ENCODE measurements at regions of chr12 and their contacts with region 1.

Region 1: GRCh38 chr12:26629864-26630263 is 203.1 kb downstream of the ITPR2 start:
- DNase-seq: no peak
- ATAC-seq: no peak
- H3K4me3 ChIP-seq: no peak overlapping the region
- H3K27ac ChIP-seq: no peak overlapping the region
- H3K4me1 ChIP-seq: no peaks in the 10 kb centered on the region
- H3K27me3 ChIP-seq: no peaks in the 10 kb centered on the region

Region 2: DNA sequence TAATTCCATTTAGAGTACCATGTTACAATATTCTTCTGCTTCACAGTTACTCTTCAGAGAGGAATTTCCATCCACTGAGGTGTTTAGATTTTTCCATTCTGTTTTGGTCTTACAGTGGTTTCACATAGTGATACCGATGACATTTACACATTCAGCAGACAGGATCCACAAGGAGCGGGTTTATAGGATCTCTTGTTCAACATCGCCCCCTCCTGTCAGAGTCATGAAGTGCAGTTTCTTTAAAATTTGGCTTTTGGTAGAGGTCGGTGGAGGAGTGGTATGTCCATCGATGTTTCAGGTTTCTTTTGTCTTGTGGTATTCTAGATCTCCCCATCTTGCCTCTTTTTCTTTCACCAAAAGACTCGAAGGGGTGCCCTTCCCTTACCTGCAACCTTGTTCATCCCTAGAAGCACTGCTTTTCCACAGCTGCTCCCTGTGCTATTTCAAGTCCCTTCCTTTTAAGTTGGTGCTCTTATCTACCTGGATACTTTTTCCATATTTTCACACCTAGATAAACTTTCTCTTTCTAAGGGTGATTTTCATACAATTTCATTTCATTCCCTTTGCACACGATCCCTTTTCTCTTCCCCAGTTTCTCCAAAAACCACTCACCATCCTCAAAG is 21.8 kb after region 1 on chr12:
- intact Hi-C with region 1: no loop called
- DNase-seq: no peak
- ATAC-seq: no peak
- H3K4me3 ChIP-seq: no peak overlapping the region
- H3K27ac ChIP-seq: no peak overlapping the region
- H3K4me1 ChIP-seq: no peaks in the 10 kb centered on the region
- H3K27me3 ChIP-seq: no peaks in the 10 kb centered on the region

Region 3: DNA sequence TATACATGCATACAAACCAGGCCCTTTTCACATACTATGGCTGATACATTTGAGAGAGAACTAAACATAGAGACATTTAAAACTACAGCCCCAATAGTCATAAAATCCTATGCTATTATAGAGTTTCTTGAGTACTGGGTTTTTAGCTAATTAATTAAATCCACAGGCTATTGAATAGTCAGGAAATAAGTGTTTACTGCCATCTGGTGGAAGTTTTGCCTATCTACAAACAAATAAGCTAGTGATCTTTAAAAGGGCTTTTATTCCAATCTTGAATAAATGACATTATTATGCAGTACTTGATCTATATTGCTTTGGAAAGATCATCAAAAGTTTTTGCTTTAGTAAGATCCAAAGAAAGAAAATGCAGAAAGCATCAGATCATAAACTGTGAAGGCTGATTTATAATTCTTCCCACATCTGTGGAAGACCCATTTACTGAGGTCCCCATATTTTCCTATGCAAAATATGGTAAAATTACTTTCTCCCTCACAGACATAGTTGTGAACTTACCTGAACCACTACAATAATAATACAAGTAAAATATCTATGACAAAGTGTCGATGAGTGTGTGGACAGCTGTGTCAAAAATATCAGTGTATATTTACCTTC is 71.8 kb after region 1 on chr12:
- intact Hi-C with region 1: loop called in 1 of 2 experiments (anchors 5 kb)
- DNase-seq: no peak
- ATAC-seq: no peak
- H3K4me3 ChIP-seq: no peak overlapping the region
- H3K27ac ChIP-seq: no peak overlapping the region
- H3K4me1 ChIP-seq: peaks cover 0 to 4% of the 10 kb centered on the region in 2 donors
- H3K27me3 ChIP-seq: no peaks in the 10 kb centered on the region

Region 4: GRCh38 chr12:26878661-26879119 is 248.8 kb after region 1 on chr12:
- intact Hi-C with region 1: loop called in 1 of 2 experiments (anchors 10 kb)
- DNase-seq: peak; percentile 49 to 77
- ATAC-seq: peak; percentile 44
- H3K4me3 ChIP-seq: no peak overlapping the region
- H3K27ac ChIP-seq: no peak overlapping the region
- H3K4me1 ChIP-seq: no peaks in the 10 kb centered on the region
- H3K27me3 ChIP-seq: no peaks in the 10 kb centered on the region

Measured in aorta (tissue), 5 donors.